ENCODE measurements at regions of chr2 and their contacts with region 1.

Region 1: DNA sequence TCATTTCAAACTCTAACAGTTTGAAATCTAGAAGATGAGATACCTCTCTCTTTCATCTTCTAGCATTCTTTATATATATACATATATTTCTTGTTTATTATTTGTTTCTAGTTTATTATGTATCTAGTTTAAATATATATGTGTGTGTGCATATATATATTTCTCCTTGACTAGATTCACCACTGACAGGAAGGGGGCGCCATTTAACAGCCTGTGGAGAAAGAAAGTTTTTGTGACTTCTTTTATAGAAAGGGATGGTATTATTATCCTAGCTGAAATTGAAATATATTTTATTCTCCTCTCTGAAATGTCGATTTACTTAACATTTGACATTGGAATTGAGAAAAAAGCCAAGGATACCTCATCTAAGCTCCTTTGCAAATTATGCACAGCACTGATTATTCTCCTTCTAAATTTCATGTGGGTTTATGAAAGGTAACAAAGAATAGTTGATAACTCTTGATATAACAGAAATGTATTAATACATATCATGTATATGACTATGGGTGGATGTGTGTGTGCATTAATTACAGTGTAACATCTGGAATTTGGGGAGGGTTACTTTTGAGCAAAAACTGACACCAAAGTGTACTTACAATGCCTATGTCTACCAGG is 160.7 kb upstream of the NT5C1B start:
- DNase-seq: peak in 1 of 3 donors; percentile 84
- ATAC-seq: peak; percentile 55
- H3K4me3 ChIP-seq: no peak overlapping the region
- H3K4me1 ChIP-seq: peaks cover 8% of the 10 kb centered on the region
- CTCF ChIP-seq: peak; percentile 30

Region 2: DNA sequence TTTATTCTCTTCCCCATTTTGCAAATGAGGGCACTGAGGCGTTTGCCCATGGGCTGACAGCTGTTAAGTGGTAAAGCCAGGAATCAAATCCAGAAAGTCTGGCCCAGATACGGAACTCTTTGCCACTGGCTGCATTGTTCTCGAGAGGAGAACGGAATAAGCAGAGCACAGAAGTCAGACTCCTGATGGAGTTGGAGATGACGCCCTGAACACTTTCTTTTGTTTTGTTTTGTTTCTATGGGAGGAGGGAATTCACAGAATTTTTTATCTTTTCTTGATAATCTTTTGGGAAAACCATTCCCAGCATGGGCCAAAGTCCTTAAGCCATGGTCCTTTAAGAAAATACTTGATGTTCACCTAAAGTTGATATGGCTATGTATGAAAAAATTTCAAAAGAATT is 511.8 kb before region 1 on chr2:
- intact Hi-C with region 1: no loop called
- DNase-seq: no peak
- ATAC-seq: no peak
- H3K4me3 ChIP-seq: no peak overlapping the region
- H3K4me1 ChIP-seq: no peaks in the 10 kb centered on the region
- CTCF ChIP-seq: no peak

Region 3: DNA sequence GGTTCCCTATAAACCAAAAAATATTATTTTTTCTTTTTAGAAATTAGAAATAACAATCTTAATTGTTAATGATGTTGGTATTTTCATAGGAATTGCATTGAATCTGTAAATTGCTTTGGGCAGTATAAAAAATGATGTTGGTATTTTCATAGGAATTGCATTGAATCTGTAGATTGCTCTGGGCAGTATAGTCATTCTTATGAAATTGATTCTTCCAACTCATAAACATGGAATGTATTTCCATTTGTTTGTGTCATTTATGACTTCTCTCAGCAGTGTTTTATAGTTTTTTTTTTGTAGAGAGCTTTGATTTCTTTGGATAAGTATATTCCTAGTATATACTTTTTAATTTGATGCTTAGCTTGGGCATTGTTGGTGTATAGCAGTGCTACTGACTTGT is 78.7 kb before region 1 on chr2:
- intact Hi-C with region 1: no loop called
- DNase-seq: no peak
- ATAC-seq: no peak
- H3K4me3 ChIP-seq: no peak overlapping the region
- H3K4me1 ChIP-seq: no peaks in the 10 kb centered on the region
- CTCF ChIP-seq: no peak

Region 4: GRCh38 chr2:19362755-19363473 is 612.9 kb after region 1 on chr2:
- intact Hi-C with region 1: loop called (anchors 10 kb)
- DNase-seq: peak; percentile 74 to 86 (median 83)
- ATAC-seq: peak; percentile 76
- H3K4me3 ChIP-seq: peak overlapping the region; percentile 30
- H3K4me1 ChIP-seq: peaks cover 12% of the 10 kb centered on the region
- CTCF ChIP-seq: peak; percentile 62